ENCODE measurements at regions of chr7 and their contacts with region 1.

Region 1: GRCh38 chr7:151519765-151520418 is at the start of gene RHEB:
- DNase-seq: peak; percentile 96 to 99
- H3K4me3 ChIP-seq: peak within 1 kb of the TSS; percentile 86 to 98
- H3K27ac ChIP-seq: peak within 1 kb of the TSS; percentile 98 to 100
- H3K4me1 ChIP-seq: peaks cover 0 to 16% of the 10 kb centered on the region in 2 donors
- H3K27me3 ChIP-seq: no peaks in the 10 kb centered on the region
- CTCF ChIP-seq: no peak
- total RNA-seq, gene RHEB: 68.6 TPM

Region 2: GRCh38 chr7:151351027-151351426 is 168.9 kb before region 1 on chr7:
- intact Hi-C with region 1: no loop called
- DNase-seq: no peak
- H3K4me3 ChIP-seq: no peak overlapping the region
- H3K27ac ChIP-seq: no peak overlapping the region
- H3K4me1 ChIP-seq: peaks cover 0 to 2% of the 10 kb centered on the region in 2 donors
- H3K27me3 ChIP-seq: no peaks in the 10 kb centered on the region
- CTCF ChIP-seq: no peak

Region 3: DNA sequence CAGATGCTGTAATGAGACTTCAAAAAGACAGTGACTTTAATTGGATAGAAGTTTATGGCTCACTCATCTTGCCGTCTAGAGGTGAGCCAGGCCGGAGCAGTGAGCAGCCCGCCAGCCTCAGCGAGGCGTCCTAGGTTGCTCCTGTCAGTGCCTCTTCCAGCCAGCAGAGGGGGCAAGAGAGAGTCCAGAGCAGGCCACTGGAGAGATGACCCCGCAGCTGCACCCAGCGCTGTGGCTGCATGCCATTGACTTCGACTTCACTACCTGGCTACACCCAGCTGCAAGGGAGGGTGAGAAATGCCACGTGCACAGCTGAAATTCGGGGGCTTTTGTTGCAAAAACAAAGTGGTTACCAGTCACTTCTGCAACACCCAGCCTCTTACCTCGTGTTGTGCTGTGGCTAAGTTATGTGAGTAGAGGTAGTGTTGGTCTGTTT is 151.7 kb before region 1 on chr7:
- intact Hi-C with region 1: loop called (anchors 5 kb)
- DNase-seq: peak in 1 of 2 donors; percentile 90
- H3K4me3 ChIP-seq: no peak overlapping the region
- H3K27ac ChIP-seq: no peak overlapping the region
- H3K4me1 ChIP-seq: peaks cover 6 to 37% of the 10 kb centered on the region in 2 donors
- H3K27me3 ChIP-seq: no peaks in the 10 kb centered on the region
- CTCF ChIP-seq: peak; percentile 90 to 97 (median 92)

Region 4: DNA sequence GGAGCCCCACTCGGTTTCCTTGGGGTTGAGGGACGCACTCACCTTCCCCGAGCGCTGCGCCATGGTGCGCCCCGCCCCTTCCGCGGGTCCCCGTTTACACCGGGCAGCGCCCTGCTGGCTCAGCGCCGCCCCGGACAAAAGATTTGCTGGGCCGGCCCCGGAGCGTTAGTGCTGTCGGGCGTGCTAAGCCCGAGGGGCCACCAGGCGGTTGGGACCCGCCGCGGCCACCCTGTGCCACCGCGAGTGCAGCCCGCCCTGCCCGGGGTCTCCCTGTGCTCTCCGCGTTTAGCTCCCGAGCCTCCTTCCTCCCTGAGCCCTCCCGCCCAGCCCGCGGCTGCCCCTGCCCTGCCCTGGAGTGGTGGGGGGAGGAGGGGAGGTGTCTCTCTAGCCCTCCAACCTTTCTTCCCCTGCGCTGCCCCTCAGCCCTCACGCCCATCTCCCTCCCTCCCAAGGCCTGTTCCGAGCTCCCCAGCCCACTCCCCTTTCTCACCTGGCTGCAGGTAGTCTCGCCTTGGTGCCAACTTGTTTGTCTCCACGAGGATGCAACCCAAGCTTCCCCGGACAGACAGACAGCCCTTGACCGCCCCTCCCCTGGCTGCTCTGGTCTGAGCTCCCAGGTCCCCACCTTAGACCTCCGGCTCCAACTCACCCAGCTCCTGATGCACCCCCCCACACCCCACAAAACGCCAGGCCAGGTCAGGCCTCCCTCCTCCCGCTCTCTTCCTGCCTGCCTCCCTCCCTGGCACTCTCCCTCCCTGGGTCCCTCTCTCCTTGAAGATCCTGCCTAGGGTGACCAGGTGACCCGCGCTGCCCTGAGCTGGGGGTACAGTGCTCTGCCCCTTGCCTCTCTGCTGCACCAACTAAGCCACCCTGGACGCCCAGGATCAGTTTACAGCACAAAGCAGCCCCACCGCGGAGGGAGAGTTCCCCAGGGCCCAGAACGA is 79.8 kb before region 1 on chr7 and contains the start of gene CRYGN:
- intact Hi-C with region 1: no loop called
- DNase-seq: peak in 1 of 2 donors; percentile 65
- H3K4me3 ChIP-seq: peak within 1 kb of the TSS; percentile 18 to 51
- H3K27ac ChIP-seq: peak within 1 kb of the TSS; percentile 88 to 95
- H3K4me1 ChIP-seq: peaks cover 20 to 46% of the 10 kb centered on the region in 2 donors
- H3K27me3 ChIP-seq: no peaks in the 10 kb centered on the region
- CTCF ChIP-seq: no peak
- total RNA-seq, gene CRYGN: not detected

Region 5: DNA sequence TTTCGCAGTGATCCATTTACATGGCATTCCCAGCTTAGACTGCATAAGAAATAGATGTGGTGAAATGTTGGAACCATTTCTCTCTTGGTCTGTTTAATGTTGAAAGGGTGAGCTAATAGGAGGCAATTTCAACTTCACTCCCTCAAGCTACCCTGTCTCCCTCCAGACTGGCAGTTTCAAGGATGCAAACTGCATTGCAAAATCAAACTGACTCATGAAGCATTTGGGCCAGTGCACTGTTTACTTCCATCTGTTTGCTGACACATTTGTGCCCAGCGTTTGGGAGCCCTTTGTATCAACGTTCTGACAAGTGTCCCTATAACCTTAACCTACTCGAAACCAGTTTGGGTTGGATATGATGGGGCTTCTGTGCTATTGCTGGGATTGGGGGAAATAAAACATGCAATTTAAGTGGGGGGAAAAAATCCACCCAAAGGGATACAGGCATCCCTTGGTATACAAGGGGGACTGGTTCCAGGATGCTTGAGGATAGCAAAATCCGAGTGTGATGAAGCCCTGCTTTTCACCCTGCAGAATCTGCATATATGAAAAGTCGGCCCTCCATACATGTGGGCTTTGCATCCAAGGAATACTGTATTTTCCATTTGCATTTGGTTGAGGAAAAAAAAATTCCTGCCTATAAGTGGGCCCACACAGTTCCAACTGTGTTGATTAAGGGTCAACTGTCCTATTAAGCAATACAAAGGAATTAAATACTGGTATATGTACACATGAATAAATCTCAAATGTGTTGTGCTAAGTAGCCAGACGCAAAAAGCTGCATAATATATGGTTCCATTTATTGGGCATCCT is 15.8 kb before region 1 on chr7:
- intact Hi-C with region 1: loop called (anchors 2 kb)
- DNase-seq: peak; percentile 15 to 83
- H3K4me3 ChIP-seq: no peak overlapping the region
- H3K27ac ChIP-seq: peak overlapping the region in 1 of 2 donors; percentile 33
- H3K4me1 ChIP-seq: peaks cover under 1 to 32% of the 10 kb centered on the region in 2 donors
- H3K27me3 ChIP-seq: no peaks in the 10 kb centered on the region
- CTCF ChIP-seq: no peak

Region 6: GRCh38 chr7:151626422-151627115 is 106.7 kb after region 1 on chr7:
- intact Hi-C with region 1: loop called (anchors 5 kb)
- DNase-seq: peak in 1 of 2 donors; percentile 63
- H3K4me3 ChIP-seq: no peak overlapping the region
- H3K27ac ChIP-seq: no peak overlapping the region
- H3K4me1 ChIP-seq: peaks cover 12 to 40% of the 10 kb centered on the region in 2 donors
- H3K27me3 ChIP-seq: no peaks in the 10 kb centered on the region
- CTCF ChIP-seq: peak; percentile 14 to 60 (median 50)

Region 7: DNA sequence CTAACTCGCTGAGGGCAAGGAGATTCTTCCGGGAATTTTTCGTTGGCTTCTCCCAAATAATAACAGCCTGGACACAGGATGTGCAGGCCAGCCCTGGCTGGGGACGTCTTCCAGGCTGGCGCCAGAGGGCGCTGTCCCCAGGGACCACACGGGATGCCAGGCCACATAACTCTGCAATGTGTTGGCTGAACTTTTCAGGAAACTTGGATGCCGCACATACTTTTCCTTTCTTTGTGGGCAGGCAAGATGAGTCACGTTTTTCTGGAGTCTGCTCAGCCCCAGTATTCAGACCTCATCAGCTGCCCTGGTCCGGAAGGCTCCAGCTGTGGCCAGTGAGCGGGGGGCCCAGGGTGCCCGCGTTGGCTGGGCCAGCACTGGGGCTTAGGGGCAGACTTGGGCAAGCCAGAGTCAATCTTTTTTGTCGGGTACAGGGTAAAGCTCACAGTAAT is 234.3 kb after region 1 on chr7:
- intact Hi-C with region 1: loop called (anchors 2 kb)
- DNase-seq: peak; percentile 64 to 94
- H3K4me3 ChIP-seq: no peak overlapping the region
- H3K27ac ChIP-seq: peak overlapping the region; percentile 81 to 89
- H3K4me1 ChIP-seq: peaks cover 9 to 48% of the 10 kb centered on the region in 2 donors
- H3K27me3 ChIP-seq: no peaks in the 10 kb centered on the region
- CTCF ChIP-seq: peak; percentile 87 to 92 (median 91)

Measured in ascending aorta (tissue), 2 donors.